A673 (cell line): ENCODE measurements at regions of chr3 and their contacts with region 1.

Region 1: DNA sequence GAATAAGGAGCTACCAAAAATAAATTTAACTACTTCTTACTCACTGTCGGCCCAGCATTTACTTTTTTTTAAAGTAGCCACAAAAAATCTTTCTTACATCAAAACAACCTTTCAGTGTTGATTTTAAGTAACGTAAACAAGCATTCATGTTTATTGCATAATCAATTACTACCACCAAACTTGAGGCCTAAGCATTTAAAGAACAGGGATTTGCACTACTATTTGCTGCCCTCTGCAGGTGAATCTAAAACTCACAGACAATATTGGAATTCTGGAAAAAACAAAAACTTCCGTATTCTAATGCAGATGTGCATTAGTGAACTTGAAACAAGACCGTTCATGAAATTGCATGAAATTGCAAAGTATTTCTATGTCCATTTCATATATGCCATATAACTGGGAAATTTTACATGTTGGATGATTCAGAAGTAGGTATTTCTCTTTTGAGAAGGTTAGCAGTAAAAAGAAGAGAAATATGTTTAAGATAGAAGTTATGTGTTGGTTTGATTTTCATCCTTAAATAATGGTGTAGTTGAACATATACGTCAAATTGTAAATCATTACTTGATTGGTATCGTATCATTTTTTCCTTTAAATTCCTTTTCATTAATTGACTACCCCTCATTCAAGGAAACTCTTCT is 55.6 kb downstream of the CGGBP1 start:
- DNase-seq: peak; percentile 87
- H3K4me3 ChIP-seq: no peak overlapping the region
- H3K27ac ChIP-seq: peak overlapping the region; percentile 56
- H3K4me1 ChIP-seq: peaks cover 41% of the 10 kb centered on the region
- H3K27me3 ChIP-seq: no peaks in the 10 kb centered on the region
- CTCF ChIP-seq: peak; percentile 86

Region 2: DNA sequence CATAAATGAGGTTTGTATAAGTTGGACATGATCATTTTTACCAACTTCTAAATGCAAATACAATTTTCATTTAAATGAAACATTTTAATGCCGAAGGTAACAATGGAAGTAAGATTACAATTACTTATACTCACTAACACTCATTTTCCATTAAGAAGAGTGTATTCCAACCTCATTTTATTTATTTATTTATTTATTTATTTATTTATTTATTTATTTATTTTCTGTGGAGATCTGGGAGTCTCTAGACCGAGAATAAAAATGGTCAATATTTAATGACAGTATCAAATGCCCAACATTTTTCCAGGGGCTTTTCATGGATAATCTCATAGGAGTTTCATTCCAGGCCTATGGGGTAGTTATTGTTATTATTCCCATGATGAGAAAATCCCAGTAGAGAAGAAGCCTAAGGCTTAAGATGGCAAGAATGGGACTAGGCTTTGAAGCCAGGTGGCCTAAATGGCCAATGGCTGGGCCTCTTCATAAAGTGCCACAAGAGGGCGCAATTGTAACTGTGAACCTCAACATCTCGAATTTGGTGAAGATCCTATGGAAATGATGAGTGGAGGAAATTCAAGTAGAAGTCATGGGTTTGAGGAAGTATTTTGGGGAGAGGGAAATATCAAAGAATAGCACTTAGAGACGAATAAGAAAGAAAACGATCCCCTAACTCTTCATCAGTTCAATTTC is 1033.6 kb before region 1 on chr3:
- CTCF ChIA-PET with region 1: no interaction called
- POLR2A ChIA-PET with region 1: no interaction called
- intact Hi-C with region 1: loop called (anchors 10 kb)
- DNase-seq: peak; percentile 83
- H3K4me3 ChIP-seq: no peak overlapping the region
- H3K27ac ChIP-seq: no peak overlapping the region
- H3K4me1 ChIP-seq: peaks cover 15% of the 10 kb centered on the region
- H3K27me3 ChIP-seq: no peaks in the 10 kb centered on the region
- CTCF ChIP-seq: peak; percentile 93

Region 3: DNA sequence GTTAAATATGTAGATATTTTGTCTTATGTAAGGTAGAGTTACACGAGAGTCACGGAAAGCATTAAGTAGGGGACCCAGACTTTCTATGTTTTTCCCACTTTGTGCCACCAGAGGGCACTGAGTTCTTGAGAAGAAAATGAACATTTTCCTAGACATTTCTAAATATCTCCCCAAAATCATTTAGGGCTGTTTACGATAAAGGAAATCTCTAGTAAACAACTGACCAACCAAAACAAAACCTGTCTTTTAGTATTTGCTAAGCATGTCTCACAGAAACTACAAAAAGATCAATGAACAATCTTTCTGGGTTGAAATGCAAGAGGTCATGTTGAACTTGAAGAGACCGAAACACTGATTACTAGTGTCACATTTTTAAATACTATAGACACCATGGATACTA is 743.0 kb before region 1 on chr3:
- CTCF ChIA-PET with region 1: interaction called, 5 read pairs
- POLR2A ChIA-PET with region 1: no interaction called
- intact Hi-C with region 1: loop called (anchors 1 kb)
- DNase-seq: peak; percentile 89
- H3K4me3 ChIP-seq: no peak overlapping the region
- H3K27ac ChIP-seq: peak overlapping the region; percentile 18
- H3K4me1 ChIP-seq: peaks cover 52% of the 10 kb centered on the region
- H3K27me3 ChIP-seq: no peaks in the 10 kb centered on the region
- CTCF ChIP-seq: peak; percentile 80

Region 4: GRCh38 chr3:87350364-87351199 is 652.7 kb before region 1 on chr3:
- CTCF ChIA-PET with region 1: interaction called, 11 read pairs
- POLR2A ChIA-PET with region 1: no interaction called
- intact Hi-C with region 1: loop called (anchors 1 kb)
- DNase-seq: peak; percentile 79
- H3K4me3 ChIP-seq: no peak overlapping the region
- H3K27ac ChIP-seq: peak overlapping the region; percentile 50
- H3K4me1 ChIP-seq: peaks cover 19% of the 10 kb centered on the region
- H3K27me3 ChIP-seq: no peaks in the 10 kb centered on the region
- CTCF ChIP-seq: peak; percentile 96

Region 5: GRCh38 chr3:87549208-87549607 is 454.0 kb before region 1 on chr3:
- CTCF ChIA-PET with region 1: interaction called, 6 read pairs
- POLR2A ChIA-PET with region 1: no interaction called
- intact Hi-C with region 1: loop called (anchors 1 kb)
- DNase-seq: peak; percentile 82
- H3K4me3 ChIP-seq: no peak overlapping the region
- H3K27ac ChIP-seq: peak overlapping the region; percentile 99
- H3K4me1 ChIP-seq: peaks cover 57% of the 10 kb centered on the region
- H3K27me3 ChIP-seq: no peaks in the 10 kb centered on the region
- CTCF ChIP-seq: no peak

Region 6: DNA sequence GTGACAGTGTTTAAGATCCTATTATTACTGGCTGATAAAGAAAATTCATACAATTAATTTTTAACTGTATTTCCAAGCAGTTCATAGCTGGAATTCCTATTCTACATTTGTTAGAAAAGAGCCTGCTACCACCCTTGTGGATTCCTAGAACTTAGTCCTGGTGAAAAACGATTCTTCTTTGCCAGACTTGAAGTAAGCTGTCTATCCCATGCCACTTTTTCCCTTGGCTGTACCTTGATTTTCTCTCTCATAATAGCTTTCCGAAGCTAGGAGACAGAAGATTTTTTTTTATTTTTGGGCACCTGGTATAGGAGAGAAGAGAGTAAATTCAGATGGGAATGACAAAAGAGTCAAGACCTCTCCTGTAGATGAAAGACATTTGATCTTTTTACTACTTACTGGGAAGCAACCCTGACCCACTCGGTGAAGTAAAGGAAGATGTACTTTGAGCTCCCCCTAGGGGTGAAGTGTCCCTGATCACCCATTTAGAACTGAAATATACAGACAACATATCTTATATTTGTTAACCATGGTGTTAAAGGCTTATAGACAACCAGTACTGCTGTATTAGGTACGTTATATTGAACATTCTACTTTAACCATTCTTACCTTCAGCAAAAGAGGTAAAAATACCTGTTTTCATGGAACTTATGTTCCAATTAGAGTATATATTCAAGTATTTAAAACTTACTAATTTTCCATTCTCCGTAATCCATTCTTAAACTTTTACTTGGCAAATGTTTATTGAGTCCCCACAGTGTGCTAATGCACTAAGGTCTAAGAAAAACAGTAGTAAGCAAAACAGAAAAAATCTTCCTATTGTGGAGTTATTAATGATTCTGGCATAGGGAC is 110.3 kb after region 1 on chr3:
- CTCF ChIA-PET with region 1: interaction called, 5 read pairs
- POLR2A ChIA-PET with region 1: no interaction called
- intact Hi-C with region 1: loop called (anchors 1 kb)
- DNase-seq: peak; percentile 88
- H3K4me3 ChIP-seq: no peak overlapping the region
- H3K27ac ChIP-seq: peak overlapping the region; percentile 41
- H3K4me1 ChIP-seq: peaks cover 18% of the 10 kb centered on the region
- H3K27me3 ChIP-seq: no peaks in the 10 kb centered on the region
- CTCF ChIP-seq: peak; percentile 85